ENCODE measurements at regions of chr18 and their contacts with region 1.

Region 1: DNA sequence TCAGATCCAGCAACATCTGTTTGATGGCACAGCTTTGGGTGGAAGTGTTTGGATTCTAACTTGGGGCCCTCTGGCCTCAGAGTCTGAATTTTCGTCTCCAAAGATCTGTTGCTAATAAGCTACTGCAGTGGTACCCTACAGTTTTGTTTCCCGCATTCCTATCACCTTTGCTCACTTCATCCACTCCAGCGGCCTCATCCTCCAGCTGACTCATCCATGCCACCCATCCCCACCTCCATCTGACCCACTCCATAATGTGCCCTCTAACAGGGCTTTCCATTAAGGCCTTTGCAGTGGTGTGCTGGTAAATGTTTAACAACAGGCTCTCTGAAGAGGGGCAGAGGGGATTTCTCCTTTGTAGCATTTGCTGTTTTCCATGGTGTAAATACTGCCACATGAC is 225.5 kb downstream of the TGIF1 start:
- DNase-seq: no peak
- H3K4me3 ChIP-seq: no peak overlapping the region
- H3K27ac ChIP-seq: no peak overlapping the region
- H3K4me1 ChIP-seq: no peaks in the 10 kb centered on the region
- H3K27me3 ChIP-seq: no peaks in the 10 kb centered on the region
- CTCF ChIP-seq: no peak
- POLR2A ChIP-seq: no peak

Region 2: DNA sequence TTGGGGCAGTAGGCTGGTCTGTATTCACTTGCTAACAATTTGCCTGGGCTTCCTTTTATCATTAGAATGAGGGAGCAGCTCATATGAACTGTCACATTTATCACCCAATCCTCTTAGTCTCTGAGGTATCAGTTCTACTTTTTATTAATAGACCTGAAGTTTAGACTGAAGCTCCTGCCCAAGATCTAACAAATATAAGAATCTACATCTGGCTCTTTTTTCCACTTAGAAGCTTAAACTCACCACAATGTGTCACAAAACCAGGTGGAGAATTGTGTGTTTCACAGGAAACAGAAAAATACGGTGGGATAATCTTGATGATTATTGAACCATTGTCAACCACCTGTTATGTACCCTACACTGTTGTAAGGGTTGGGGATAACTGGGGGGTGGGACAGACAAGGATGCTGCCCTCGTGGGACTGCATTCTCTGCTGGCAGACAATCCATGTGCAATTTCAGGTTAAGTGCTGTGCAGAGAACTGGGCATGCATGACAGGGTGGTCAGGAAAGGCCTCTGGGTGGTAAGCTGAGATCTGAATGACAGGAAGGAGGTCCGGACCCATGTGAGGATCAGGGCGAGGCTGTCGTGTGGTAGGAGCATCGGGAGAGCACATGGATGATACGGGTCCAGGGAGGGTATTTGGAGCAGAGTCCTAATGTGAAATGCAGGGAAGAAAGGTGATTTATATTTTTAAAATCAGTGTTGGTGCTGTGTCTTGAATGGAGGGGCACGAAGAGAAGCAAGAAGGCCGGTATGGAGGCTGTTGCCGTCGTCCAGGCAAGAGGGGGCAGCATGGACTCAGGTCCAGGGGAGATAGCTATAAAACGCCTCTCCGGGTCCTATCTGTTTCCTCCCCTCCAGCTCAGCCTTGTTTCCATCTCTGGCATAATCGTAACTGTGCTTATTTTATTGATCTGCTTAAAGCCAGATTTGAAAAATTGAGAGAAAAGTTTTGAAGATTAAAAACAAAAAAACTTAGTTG is 396.0 kb before region 1 on chr18:
- intact Hi-C with region 1: loop called (anchors 10 kb)
- DNase-seq: no peak
- H3K4me3 ChIP-seq: no peak overlapping the region
- H3K27ac ChIP-seq: no peak overlapping the region
- H3K4me1 ChIP-seq: no peaks in the 10 kb centered on the region
- H3K27me3 ChIP-seq: no peaks in the 10 kb centered on the region
- CTCF ChIP-seq: no peak
- POLR2A ChIP-seq: no peak

Region 3: GRCh38 chr18:3720826-3721545 is 45.5 kb after region 1 on chr18:
- intact Hi-C with region 1: no loop called
- DNase-seq: no peak
- H3K4me3 ChIP-seq: no peak overlapping the region
- H3K27ac ChIP-seq: peak overlapping the region; percentile 30 to 64
- H3K4me1 ChIP-seq: peaks cover 0 to 4% of the 10 kb centered on the region in 2 donors
- H3K27me3 ChIP-seq: no peaks in the 10 kb centered on the region
- CTCF ChIP-seq: no peak
- POLR2A ChIP-seq: no peak

Region 4: DNA sequence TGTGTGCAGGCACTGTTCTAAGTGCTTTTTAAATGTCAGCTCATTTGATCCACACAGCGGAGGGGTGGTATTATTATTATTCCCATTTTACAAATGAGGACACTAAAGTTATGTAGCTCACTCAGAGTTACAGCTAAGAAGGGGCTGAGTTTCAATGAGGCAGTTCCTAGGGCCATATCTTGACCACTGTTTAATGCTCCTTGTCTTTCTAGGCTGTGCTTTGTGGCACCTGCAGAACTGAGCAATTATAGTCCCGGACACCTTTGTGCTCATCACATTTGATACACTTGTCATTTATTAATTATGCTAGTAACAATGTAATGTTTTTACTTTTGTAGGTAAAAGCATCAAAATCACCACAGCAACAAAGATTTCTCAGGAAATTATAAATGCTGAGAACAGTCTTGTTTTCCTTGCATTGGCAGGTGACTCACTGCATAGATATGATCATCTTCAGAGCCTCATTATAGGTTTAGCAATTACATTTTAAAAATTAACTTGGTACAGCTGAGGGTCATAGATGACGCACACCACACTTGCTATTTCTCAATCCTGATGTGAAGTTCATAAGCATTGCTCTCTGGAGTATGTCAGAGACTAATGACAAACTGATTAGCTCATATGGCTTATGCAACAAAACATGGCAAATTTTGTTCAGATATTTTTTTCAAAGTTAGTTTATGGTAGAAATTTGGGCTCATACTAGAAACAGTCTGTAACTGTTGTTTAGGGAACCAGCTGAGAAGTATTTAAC is 141.3 kb after region 1 on chr18:
- intact Hi-C with region 1: no loop called
- DNase-seq: no peak
- H3K4me3 ChIP-seq: no peak overlapping the region
- H3K27ac ChIP-seq: peak overlapping the region in 1 of 2 donors; percentile 32
- H3K4me1 ChIP-seq: no peaks in the 10 kb centered on the region
- H3K27me3 ChIP-seq: no peaks in the 10 kb centered on the region
- CTCF ChIP-seq: no peak
- POLR2A ChIP-seq: no peak